AG04449 (cell line): ENCODE measurements at regions of chr10 and their contacts with region 1.

Region 1: GRCh38 chr10:13160934-13161856 is at the start of gene MCM10:
- DNase-seq: peak; percentile 97
- H3K4me3 ChIP-seq: peak within 1 kb of the TSS; percentile 67
- CTCF ChIP-seq: peak; percentile 82

Region 2: DNA sequence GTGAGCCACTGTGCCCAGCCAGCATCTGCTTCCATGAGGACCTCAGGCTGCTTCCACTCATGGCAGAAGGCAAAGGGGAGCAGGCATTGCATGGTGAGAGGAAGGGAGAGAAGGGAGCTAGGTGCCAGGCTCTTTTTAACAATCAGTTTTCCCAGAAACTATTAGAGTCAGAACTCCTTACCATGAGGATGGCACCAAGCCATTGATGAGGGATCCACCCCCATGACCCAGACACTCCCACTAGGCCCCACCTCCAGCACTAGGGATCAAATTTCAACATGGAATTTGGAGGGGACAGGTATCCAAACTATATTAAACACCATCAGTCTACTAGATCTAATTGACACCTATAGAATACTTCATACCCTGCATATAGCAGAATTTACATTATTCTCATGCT is 14.0 kb before region 1 on chr10:
- CTCF ChIA-PET with region 1: interaction called, 16 read pairs
- POLR2A ChIA-PET with region 1: no interaction called
- DNase-seq: no peak
- H3K4me3 ChIP-seq: no peak overlapping the region
- CTCF ChIP-seq: no peak